ENCODE measurements at regions of chr16 and their contacts with region 1.

Region 1: DNA sequence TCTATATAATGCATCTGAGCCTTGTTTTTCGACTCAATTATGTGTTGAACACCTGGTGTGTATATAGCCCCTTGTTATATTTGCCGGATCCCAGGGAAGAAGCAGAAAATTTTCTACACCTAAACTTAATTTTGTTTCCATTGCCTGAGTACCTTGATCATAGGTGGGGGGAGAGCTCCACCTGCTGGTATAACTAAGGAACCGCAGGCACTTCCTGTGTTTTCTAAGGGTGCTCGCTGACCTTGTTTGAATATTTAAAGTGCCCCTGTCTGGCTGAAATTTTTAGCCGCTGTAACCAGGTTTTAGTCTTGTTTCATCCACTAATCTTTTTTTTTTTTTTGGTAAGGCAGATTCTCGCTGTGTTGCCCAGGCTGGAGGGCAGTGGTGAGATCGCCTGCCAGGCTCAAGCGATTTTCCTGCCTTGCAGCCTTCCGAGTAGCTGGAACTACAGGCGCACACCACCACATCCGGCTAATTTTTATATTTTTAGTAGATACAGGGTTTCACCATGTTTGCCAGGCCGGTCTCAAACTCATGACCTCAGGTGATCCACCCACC is 6.5 kb upstream of the NUBP1 start:
- DNase-seq: peak; percentile 61 to 76
- H3K4me3 ChIP-seq: no peak overlapping the region
- H3K4me3 Mint-ChIP-seq: no peak overlapping the region
- H3K27ac Mint-ChIP-seq: no peak overlapping the region
- H3K4me1 ChIP-seq: peaks cover 18% of the 10 kb centered on the region
- H3K4me1 Mint-ChIP-seq: no peaks in the 10 kb centered on the region
- H3K27me3 ChIP-seq: no peaks in the 10 kb centered on the region
- H3K27me3 Mint-ChIP-seq: no peaks in the 10 kb centered on the region
- CTCF ChIP-seq: peak; percentile 84 to 94

Region 2: GRCh38 chr16:10566589-10566988 is 170.6 kb before region 1 on chr16:
- CTCF ChIA-PET with region 1: no interaction called
- POLR2A ChIA-PET with region 1: no interaction called
- intact Hi-C with region 1: loop called (anchors 5 kb)
- DNase-seq: no peak
- H3K4me3 ChIP-seq: no peak overlapping the region
- H3K4me3 Mint-ChIP-seq: no peak overlapping the region
- H3K27ac Mint-ChIP-seq: no peak overlapping the region
- H3K4me1 ChIP-seq: no peaks in the 10 kb centered on the region
- H3K4me1 Mint-ChIP-seq: peaks cover 17% of the 10 kb centered on the region
- H3K27me3 ChIP-seq: no peaks in the 10 kb centered on the region
- H3K27me3 Mint-ChIP-seq: no peaks in the 10 kb centered on the region
- CTCF ChIP-seq: peak; percentile 13 to 17

Region 3: DNA sequence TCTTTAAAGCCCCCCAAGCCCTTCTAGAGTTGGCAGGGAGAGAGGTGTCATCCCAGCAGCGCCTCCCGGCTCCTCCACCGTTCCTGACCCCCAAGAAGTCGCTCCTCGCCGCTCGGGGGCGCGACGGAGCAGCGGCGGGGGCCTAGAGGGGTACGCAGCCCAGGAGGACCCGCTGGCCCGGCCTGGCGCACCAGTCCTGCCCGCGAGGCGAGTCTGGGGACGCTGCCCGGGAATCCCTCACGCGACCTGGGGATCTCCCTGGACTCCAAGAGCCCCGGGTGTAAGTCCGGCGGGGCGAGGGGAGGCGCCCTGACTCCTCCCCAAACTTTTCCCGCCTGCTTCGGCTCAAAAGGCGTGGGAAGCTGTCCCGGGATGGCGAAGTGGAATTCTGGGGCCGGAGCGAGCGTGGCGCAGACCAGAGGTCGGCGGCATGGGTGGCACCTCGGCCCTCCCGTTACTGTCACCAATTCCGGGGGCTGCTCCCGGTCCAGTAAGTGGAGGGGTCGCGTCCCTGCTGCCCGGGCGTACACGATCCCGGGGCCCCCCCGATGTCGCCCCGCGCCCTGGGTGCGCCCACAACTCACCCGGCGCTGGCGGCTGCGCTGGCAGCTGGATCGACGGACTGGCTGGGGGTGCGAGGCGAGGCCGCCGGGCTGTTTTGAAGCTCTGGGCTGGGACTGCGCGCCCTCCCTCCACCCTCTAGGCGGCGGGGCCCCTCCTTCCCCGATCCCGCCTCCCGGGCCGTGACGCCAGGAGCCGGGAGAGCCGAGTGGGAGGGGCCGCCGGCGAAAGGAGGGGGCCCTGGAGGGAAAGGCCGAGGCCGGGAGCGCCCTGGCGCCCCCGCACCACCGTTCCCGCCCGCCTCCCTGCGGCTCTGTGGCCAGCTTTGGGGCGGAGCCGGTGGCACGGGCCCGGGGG is 156.9 kb before region 1 on chr16 and contains the start of gene EMP2:
- CTCF ChIA-PET with region 1: no interaction called
- POLR2A ChIA-PET with region 1: no interaction called
- intact Hi-C with region 1: loop called (anchors 2 kb)
- DNase-seq: peak; percentile 85 to 93
- H3K4me3 ChIP-seq: peak within 1 kb of the TSS; percentile 96
- H3K4me3 Mint-ChIP-seq: peak within 1 kb of the TSS; percentile 90
- H3K27ac Mint-ChIP-seq: peak within 1 kb of the TSS; percentile 93
- H3K4me1 ChIP-seq: peaks cover 49% of the 10 kb centered on the region
- H3K4me1 Mint-ChIP-seq: peaks cover 50% of the 10 kb centered on the region
- H3K27me3 ChIP-seq: no peaks in the 10 kb centered on the region
- H3K27me3 Mint-ChIP-seq: no peaks in the 10 kb centered on the region
- CTCF ChIP-seq: peak; percentile 48 to 81
- total RNA-seq, gene EMP2: 187 and 198 TPM in 2 replicates

Region 4: GRCh38 chr16:10622036-10622921 is 114.9 kb before region 1 on chr16:
- CTCF ChIA-PET with region 1: no interaction called
- POLR2A ChIA-PET with region 1: no interaction called
- intact Hi-C with region 1: loop called (anchors 5 kb)
- DNase-seq: peak; percentile 94 to 98
- H3K4me3 ChIP-seq: peak overlapping the region; percentile 31
- H3K4me3 Mint-ChIP-seq: peak overlapping the region; percentile 82
- H3K27ac Mint-ChIP-seq: peak overlapping the region; percentile 93
- H3K4me1 ChIP-seq: peaks cover 69% of the 10 kb centered on the region
- H3K4me1 Mint-ChIP-seq: peaks cover 31% of the 10 kb centered on the region
- H3K27me3 ChIP-seq: no peaks in the 10 kb centered on the region
- H3K27me3 Mint-ChIP-seq: no peaks in the 10 kb centered on the region
- CTCF ChIP-seq: no peak

Region 5: GRCh38 chr16:10668322-10669045 is 68.7 kb before region 1 on chr16:
- CTCF ChIA-PET with region 1: no interaction called
- POLR2A ChIA-PET with region 1: no interaction called
- intact Hi-C with region 1: loop called (anchors 10 kb)
- DNase-seq: peak; percentile 45 to 56
- H3K4me3 ChIP-seq: no peak overlapping the region
- H3K4me3 Mint-ChIP-seq: no peak overlapping the region
- H3K27ac Mint-ChIP-seq: no peak overlapping the region
- H3K4me1 ChIP-seq: no peaks in the 10 kb centered on the region
- H3K4me1 Mint-ChIP-seq: peaks cover 5% of the 10 kb centered on the region
- H3K27me3 ChIP-seq: no peaks in the 10 kb centered on the region
- H3K27me3 Mint-ChIP-seq: no peaks in the 10 kb centered on the region
- CTCF ChIP-seq: peak; percentile 49 to 60

Measured in Caco-2 (cell line).